ENCODE measurements at regions of chr9 and their contacts with region 1.

Region 1: GRCh38 chr9:136545966-136546698 is at the start of gene NOTCH1:
- DNase-seq: peak; percentile 91
- H3K4me3 ChIP-seq: peak within 1 kb of the TSS; percentile 77 to 78
- H3K27ac ChIP-seq: peak within 1 kb of the TSS; percentile 93 to 95
- H3K4me1 ChIP-seq: peaks cover 22% of the 10 kb centered on the region
- H3K27me3 ChIP-seq: no peaks in the 10 kb centered on the region
- CTCF ChIP-seq: peak in 2 of 4 experiments; percentile 11 to 12
- POLR2A ChIP-seq: peak; percentile 76
- total RNA-seq, gene NOTCH1: 38.0 to 63.3 TPM

Region 2: DNA sequence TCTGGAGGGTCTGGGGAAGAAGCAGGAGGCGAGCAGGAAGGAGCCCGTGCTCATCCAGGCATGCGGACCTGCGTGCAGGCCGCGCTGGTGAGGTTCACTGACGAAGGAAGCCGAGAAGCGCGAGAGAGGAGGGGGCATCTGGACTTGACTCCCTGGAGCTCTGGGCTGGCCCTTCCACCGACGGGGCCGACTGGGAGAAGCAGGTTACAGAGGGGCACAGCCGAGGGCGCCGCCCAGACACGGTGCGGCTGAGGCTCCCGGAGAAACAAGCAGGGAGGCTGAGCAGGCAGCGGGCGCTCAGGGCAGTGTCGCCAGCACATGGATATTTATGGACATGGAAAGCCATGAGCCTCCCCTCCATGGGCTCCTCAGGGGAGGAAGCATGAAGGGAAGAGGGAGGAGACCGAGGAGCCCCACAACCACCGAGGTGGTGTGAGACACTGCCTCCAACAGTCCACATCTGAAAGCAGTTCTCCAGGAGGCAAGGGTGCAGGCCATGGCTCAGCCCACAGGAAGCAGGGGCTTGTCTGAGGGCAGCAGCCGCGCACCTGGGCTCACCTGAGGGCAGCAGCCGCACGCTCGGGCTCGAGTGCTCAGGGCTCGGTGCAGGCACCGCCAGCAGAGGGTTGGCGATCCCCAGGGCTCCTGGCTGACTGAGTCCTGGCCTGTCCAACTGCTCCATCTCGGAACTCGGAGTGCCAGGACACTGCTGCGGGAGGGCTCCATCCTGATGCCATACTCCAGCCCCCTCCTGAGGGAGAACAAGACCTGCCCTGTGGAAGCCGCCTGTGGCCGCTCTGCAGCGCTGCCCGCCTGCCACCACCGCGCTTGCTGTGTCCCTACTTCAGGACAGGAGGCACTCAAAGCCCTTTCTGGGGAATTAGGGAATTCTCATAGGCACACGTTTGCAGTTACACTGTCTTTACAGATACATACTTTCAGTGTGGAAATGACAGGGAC is 90.8 kb before region 1 on chr9:
- intact Hi-C with region 1: no loop called
- DNase-seq: no peak
- H3K4me3 ChIP-seq: no peak overlapping the region
- H3K27ac ChIP-seq: no peak overlapping the region
- H3K4me1 ChIP-seq: no peaks in the 10 kb centered on the region
- H3K27me3 ChIP-seq: no peaks in the 10 kb centered on the region
- CTCF ChIP-seq: no peak
- POLR2A ChIP-seq: no peak

Region 3: DNA sequence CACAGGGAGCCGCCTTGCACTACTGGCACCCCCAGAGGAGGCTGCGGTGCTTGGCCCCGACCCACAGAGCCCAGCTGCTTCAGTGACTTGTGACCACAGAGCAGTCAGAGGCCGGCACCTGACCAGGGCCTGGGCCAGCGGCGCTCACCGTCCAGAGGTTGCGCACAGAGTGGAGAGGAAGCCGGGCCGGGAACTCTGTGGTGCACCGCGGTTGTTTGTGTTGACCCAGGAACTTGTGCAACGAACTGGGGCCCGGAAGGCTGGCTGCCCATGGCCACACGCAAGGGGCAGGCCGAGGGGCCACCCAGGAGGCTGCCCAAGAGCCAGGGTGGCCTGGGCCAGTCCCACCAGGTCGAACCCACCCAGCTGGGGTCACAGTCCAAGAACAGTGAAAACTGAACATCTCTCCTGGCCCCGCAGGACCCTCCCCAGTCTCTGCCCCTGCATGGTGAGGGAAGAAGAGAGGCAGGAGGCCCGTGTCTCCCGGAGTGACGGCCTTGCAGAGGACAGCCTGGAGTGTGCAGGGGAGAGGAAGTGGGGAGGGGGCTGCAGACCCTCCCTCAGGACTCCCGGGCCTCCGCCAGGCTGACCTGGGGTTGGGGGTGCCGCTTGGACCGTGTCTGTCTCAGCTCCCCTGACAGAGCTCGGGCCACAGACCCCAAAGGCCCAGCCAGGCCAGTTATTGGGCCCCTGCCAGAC is 73.8 kb after region 1 on chr9:
- intact Hi-C with region 1: loop called (anchors 5 kb)
- DNase-seq: no peak
- H3K4me3 ChIP-seq: no peak overlapping the region
- H3K27ac ChIP-seq: peak overlapping the region in 1 of 2 donors; percentile 58
- H3K4me1 ChIP-seq: peaks cover 12% of the 10 kb centered on the region
- H3K27me3 ChIP-seq: no peaks in the 10 kb centered on the region
- CTCF ChIP-seq: no peak
- POLR2A ChIP-seq: no peak

Measured in prostate gland (tissue), 2 donors.